A549 (cell line): ENCODE measurements at regions of chr15 and their contacts with region 1.

Region 1: DNA sequence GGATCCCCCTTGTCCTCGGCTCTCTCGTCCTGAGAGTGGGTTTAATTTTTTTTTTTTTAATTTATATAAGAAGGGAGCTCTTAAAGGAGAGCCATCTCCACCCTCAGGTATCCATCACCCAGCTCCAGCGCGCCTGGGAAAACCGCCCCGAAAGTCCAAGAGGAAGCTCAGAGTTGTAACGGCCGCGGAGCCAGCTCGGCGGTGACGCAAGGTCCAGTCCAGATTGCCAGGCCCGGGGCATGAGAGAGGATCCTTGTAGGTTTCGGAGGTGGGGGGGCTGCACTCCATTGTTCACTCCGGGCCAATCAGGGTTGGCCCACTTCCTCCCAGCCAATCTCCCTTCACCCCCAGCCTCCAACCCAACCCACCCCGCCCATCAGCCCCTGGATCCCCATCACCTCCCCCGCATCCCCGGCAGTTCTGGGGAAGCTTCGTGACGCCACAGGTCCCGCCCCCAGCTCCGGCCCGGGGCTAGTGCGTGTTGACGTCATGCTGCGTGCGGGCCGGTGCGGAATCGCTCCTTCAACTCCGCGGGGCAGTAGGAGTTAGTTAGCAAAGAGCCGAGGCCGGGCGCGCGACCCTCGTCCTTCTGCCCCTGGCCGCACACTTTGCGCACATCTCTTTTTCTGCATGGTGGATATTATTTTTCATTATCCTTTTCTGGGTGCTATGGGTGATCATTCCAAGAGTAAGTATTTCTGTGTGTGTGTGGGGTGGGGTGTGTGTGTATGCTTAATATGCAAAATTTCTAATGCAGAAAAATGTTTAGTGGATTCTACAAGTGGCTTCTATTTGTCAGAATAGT is at the start of gene ISL2:
- DNase-seq: peak; percentile 99 to 100
- ATAC-seq: peak; percentile 90 to 95
- H3K4me3 ChIP-seq: peak within 1 kb of the TSS; percentile 75
- H3K27ac ChIP-seq: peak within 1 kb of the TSS; percentile 94 to 97
- H3K4me1 ChIP-seq: peaks cover 31% of the 10 kb centered on the region
- CTCF ChIP-seq: no peak
- EP300 ChIP-seq: 0 out of 5 replicates have a peak, but pooled peaks of 1 of the 2 experiments have one; percentile 9
- POLR2A ChIP-seq: peak; percentile 95
- RAD21 ChIP-seq: peak in 1 of 2 experiments; percentile 8; a peak in 2 of 5 replicates
- polyA plus RNA-seq, gene ISL2: 2.6 TPM in 2 replicates

Region 2: DNA sequence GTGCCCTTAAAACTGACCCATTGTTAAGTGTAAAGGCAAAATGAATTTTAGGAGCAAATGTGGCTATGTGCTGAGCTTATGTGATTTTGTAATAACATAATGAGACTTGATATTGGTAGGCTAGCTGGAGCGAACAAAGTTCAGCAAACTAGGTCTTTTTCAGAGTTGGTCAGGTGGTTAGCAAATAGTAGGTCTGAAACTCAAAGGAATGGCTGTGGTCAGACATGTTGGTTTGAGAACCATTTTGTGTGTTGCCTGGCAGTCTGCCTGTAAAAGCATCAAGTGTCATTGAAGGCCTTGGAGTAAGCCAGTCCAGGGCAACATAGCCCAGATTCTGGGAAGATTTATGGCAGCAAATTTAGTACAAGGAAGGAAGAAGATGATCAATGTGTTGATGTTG is 416.4 kb before region 1 on chr15:
- CTCF ChIA-PET with region 1: no interaction called
- POLR2A ChIA-PET with region 1: no interaction called
- DNase-seq: no peak
- ATAC-seq: no peak
- H3K4me3 ChIP-seq: no peak overlapping the region
- H3K27ac ChIP-seq: no peak overlapping the region
- H3K4me1 ChIP-seq: peaks cover 20% of the 10 kb centered on the region; the same call in 2 of the 3 replicates
- CTCF ChIP-seq: no peak
- EP300 ChIP-seq: no peak
- POLR2A ChIP-seq: no peak
- RAD21 ChIP-seq: no peak

Region 3: DNA sequence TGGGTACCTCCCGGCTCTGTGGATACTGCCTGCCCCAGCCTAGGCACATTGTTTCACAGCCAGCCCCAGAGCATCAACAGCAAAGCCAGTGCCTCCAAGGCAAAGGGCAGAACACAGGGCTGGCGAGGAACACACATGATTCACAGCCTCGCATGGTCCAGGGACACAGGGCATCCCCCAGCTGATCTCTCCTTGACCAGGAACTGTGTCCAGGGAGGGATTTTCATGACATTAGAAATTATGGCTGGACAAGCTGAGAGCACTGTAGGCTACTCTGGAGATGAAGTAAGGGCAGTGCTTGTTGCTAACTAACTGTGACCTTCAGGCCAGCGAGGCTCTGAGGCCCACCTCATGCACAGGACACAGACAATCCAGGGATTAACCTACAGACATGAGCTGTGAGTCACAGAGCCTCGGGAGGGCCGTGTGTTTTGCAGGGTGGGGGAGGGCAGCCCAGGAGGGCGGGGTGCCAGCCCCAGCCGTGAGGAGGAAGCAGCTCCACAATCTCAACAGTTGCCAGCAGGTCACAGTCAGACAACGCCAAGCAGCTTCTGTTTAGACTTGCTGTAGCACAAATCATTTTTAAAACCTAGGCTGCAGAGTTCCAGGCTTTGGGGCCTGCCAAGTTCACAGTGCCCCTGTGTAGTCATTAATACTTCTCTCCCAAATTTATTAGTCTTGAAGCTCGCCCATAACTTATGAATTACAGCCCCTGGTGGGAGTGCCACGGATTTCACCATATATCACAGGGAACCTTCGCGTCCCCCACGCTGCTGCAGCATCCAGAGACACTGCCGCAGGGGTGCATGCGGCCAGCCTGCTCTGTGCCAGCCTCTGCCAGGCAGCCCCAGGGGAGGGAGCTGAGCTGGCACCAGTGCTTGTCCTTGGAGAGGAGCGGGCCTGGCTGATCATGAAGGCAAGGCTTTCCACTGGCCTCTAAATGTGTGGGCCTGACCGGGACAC is 139.9 kb before region 1 on chr15:
- CTCF ChIA-PET with region 1: interaction called, 44 read pairs
- POLR2A ChIA-PET with region 1: interaction called, 10 read pairs
- DNase-seq: peak; percentile 85 to 91
- ATAC-seq: peak; percentile 65 to 82
- H3K4me3 ChIP-seq: no peak overlapping the region
- H3K27ac ChIP-seq: peak overlapping the region; percentile 71 to 87
- H3K4me1 ChIP-seq: peaks cover 44% of the 10 kb centered on the region
- CTCF ChIP-seq: no peak
- EP300 ChIP-seq: no peak
- POLR2A ChIP-seq: no peak
- RAD21 ChIP-seq: no peak

Region 4: GRCh38 chr15:76311100-76311953 is 25.1 kb before region 1 on chr15 and contains the start of gene ETFA:
- CTCF ChIA-PET with region 1: interaction called, 16 read pairs
- POLR2A ChIA-PET with region 1: interaction called, 61 read pairs
- DNase-seq: peak; percentile 99 to 100
- ATAC-seq: peak; percentile 90 to 93
- H3K4me3 ChIP-seq: peak within 1 kb of the TSS; percentile 66
- H3K27ac ChIP-seq: peak within 1 kb of the TSS; percentile 87 to 94
- H3K4me1 ChIP-seq: peaks cover 56% of the 10 kb centered on the region
- CTCF ChIP-seq: no peak
- EP300 ChIP-seq: no peak
- POLR2A ChIP-seq: peak; percentile 94
- RAD21 ChIP-seq: peak in 1 of 2 experiments; percentile 17; a peak in 1 of 5 replicates
- polyA plus RNA-seq, gene ETFA: 395 and 412 TPM in 2 replicates

Region 5: GRCh38 chr15:76324066-76324465 is 12.4 kb before region 1 on chr15:
- CTCF ChIA-PET with region 1: interaction called, 11 read pairs
- POLR2A ChIA-PET with region 1: interaction called, 5 read pairs
- DNase-seq: no peak
- ATAC-seq: no peak
- H3K4me3 ChIP-seq: no peak overlapping the region
- H3K27ac ChIP-seq: no peak overlapping the region
- H3K4me1 ChIP-seq: peaks cover 34% of the 10 kb centered on the region
- CTCF ChIP-seq: no peak
- EP300 ChIP-seq: no peak
- POLR2A ChIP-seq: no peak
- RAD21 ChIP-seq: no peak